GM23248 (cell line): ENCODE measurements at regions of chr4 and their contacts with region 1.

Region 1: DNA sequence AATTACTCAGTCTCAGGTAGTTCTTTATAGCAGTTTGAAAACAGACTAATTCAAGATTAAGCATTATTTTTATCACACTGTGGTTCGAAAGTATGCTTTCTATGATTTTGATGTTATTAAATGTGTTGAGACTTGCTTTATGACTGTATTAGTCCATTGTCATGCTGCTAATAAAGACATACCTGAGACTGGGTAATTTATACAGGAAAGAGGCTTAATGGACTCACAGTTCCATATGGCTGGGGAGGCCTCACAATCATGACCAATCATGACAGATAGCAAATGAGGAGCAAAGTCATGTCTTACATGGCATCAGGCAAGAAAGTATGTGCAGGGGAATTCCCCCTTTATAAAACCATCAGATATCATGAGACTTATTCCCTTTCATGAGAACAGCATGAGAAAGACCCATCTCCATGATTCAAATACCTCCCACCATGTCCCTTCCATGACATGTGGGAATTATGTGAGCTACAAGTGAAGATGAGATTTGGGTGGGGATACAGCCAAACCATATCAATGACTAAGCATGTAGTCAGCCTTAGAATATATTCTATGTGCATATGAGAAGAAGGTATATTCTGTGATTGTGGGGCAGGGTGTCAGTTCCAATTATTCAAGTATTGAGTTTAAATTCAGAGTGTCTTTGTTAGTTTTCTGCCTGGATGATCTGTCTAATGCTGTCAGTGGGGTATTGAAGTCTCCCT is 44.6 kb upstream of the UGT2A1 start:
- DNase-seq: no peak
- H3K4me3 ChIP-seq: no peak overlapping the region
- H3K27ac ChIP-seq: no peak overlapping the region
- H3K4me1 ChIP-seq: no peaks in the 10 kb centered on the region
- H3K27me3 ChIP-seq: no peaks in the 10 kb centered on the region; the same call in 1 of the 2 replicates

Region 2: DNA sequence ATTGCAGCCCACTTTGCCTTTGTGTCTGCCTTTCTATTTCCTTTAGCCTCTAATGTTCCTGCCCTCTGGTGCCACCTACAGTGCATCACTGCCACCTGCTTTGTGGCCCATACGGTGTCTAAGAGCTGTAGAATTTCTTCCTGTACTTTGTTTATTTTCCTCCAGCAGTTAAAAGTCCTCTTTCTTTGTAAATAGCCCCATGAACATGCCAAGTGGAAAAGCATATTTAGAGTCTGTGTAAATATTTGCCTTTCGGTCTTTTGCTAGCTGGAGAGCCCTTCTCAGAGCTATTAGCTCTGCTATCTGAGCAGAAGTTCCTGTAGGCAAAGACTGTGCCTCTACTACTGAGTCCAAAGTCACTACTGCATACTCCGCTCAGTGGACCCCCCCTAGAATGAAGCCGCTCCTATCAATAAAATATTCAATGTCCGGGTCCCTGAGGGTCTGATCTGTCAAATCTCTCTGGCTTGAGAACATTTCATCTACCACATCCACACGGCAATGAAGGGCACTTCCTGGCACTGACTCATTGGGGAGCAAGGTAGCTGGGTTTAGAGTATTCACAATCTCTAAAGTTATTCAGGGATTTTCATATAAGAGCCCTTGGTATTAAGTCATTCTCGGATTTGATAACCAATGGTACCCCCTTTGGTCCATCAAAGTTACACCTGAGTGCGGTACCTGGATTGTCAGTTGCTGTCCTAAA is 125.9 kb after region 1 on chr4:
- in situ Hi-C with region 1: loop called (anchors 10 kb)
- DNase-seq: peak; percentile 63
- H3K4me3 ChIP-seq: no peak overlapping the region
- H3K27ac ChIP-seq: no peak overlapping the region
- H3K4me1 ChIP-seq: no peaks in the 10 kb centered on the region
- H3K27me3 ChIP-seq: no peaks in the 10 kb centered on the region